KBM-7 (cell line): ENCODE measurements at regions of chr10 and their contacts with region 1.

Region 1: GRCh38 chr10:93680412-93681047 is 21.9 kb downstream of the FRA10AC1 start:
- DNase-seq: peak; percentile 61

Region 2: GRCh38 chr10:93352638-93353383 is 327.7 kb before region 1 on chr10:
- in situ Hi-C with region 1: loop called (anchors 25 kb)
- DNase-seq: peak; percentile 56

Region 3: GRCh38 chr10:93726024-93726423 is 45.5 kb after region 1 on chr10:
- in situ Hi-C with region 1: no loop called
- DNase-seq: no peak